Caco-2 (cell line): ENCODE measurements at regions of chr6 and their contacts with region 1.

Region 1: GRCh38 chr6:108002365-108003221 is 44.6 kb upstream of the SEC63 start:
- DNase-seq: peak; percentile 64 to 70
- H3K4me3 ChIP-seq: no peak overlapping the region
- H3K4me3 Mint-ChIP-seq: peak overlapping the region; percentile 44
- H3K27ac Mint-ChIP-seq: peak overlapping the region; percentile 91
- H3K4me1 ChIP-seq: peaks cover 29% of the 10 kb centered on the region
- H3K4me1 Mint-ChIP-seq: peaks cover 14% of the 10 kb centered on the region
- H3K27me3 ChIP-seq: no peaks in the 10 kb centered on the region
- H3K27me3 Mint-ChIP-seq: no peaks in the 10 kb centered on the region
- CTCF ChIP-seq: no peak

Region 2: GRCh38 chr6:108030211-108030610 is 27.6 kb after region 1 on chr6:
- CTCF ChIA-PET with region 1: no interaction called
- POLR2A ChIA-PET with region 1: no interaction called
- intact Hi-C with region 1: loop called (anchors 1 kb)
- DNase-seq: peak in 1 of 2 experiments; percentile 6
- H3K4me3 ChIP-seq: no peak overlapping the region
- H3K4me3 Mint-ChIP-seq: no peak overlapping the region
- H3K27ac Mint-ChIP-seq: peak overlapping the region; percentile 19
- H3K4me1 ChIP-seq: peaks cover 22% of the 10 kb centered on the region
- H3K4me1 Mint-ChIP-seq: peaks cover 27% of the 10 kb centered on the region
- H3K27me3 ChIP-seq: no peaks in the 10 kb centered on the region
- H3K27me3 Mint-ChIP-seq: no peaks in the 10 kb centered on the region
- CTCF ChIP-seq: no peak

Region 3: DNA sequence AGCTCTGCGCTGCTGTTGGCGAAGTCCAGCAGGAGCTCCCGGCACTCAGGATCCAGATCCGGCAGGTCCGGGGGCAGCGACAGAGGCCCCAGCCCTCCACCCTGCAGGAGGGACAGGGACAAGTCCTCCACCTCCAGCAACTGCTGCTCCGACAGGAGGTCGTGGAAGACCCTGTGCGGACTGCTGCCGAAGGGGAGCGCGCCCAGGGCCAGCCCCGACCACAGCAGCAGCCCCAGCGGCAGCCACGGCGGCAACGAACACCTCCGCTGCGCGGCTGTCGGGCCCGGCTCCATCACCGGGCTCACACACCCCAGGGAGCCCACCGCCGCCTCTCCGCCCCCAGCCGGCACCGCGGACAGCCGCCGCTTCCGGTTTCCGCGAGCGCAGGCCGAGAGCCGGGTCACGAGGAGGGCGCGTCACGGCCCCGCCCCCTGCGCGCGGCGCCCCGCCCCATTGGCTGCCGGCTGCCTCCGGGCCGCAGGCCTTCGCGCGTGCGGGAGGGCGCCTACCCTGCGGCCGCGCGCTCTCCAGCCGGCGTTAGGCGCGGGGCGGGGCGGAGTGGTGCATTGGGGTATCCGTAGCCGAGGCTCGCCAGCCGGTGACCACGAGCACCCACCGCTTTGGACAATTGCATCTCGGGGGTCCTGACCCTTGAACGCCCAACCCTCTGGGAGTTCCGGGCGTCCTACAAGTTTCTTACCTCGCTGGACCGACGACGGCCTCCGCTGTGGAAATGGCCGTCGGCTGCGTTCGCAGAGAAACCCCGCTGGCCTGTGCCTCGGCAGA is 72.0 kb after region 1 on chr6 and contains the start of gene OSTM1:
- CTCF ChIA-PET with region 1: no interaction called
- POLR2A ChIA-PET with region 1: no interaction called
- intact Hi-C with region 1: loop called (anchors 1 kb)
- DNase-seq: peak; percentile 84 to 95
- H3K4me3 ChIP-seq: peak within 1 kb of the TSS; percentile 96
- H3K4me3 Mint-ChIP-seq: peak within 1 kb of the TSS; percentile 75
- H3K27ac Mint-ChIP-seq: peak within 1 kb of the TSS; percentile 59
- H3K4me1 ChIP-seq: no peaks in the 10 kb centered on the region
- H3K4me1 Mint-ChIP-seq: no peaks in the 10 kb centered on the region
- H3K27me3 ChIP-seq: no peaks in the 10 kb centered on the region
- H3K27me3 Mint-ChIP-seq: no peaks in the 10 kb centered on the region
- CTCF ChIP-seq: no peak
- total RNA-seq, gene OSTM1: 15.9 and 20.1 TPM in 2 replicates